Natural killer cell (primary cell): ENCODE measurements at regions of chr6 and their contacts with region 1.

Region 1: DNA sequence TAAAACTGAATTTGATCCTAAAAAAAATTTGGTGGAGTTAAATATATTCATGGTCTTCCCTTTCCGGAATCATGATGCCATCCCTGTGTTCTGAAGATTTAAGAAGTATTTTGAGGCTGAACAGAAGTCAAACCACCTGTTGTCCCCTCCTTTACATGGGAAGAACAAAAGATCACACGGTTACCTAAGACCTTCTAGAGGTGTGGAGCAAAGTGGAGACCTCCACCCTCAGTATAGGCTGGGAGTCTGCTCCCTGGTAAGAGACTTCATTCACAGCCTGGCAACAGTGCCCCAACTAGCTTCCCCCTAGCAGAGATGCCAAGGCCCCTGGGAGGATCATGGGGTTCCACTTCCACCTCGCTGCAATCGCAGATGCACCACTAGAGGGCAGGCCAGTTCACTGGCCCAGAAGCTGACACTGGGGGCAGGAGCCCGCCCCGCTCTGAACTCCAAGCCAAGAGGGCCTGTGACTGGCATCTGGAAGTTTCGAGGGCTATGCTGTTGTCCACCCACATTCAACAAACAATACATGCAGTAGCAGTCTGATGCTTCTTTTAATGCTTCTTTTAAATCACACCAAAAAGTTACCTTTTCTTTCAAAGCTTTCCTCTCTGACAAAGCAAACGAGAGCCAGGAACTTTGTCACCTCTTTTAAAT is 19.5 kb upstream of the UBE2J1 start:
- DNase-seq: peak; percentile 74 to 88
- ATAC-seq: peak; percentile 66 to 80 (median 72)
- H3K4me3 ChIP-seq: no peak overlapping the region
- H3K4me3 Mint-ChIP-seq: no peak overlapping the region
- H3K27ac ChIP-seq: no peak overlapping the region
- H3K27ac Mint-ChIP-seq: no peak overlapping the region
- H3K4me1 ChIP-seq: peaks cover 17% of the 10 kb centered on the region
- H3K4me1 Mint-ChIP-seq: peaks cover 14 to 25% of the 10 kb centered on the region in 2 donors
- H3K27me3 ChIP-seq: peaks cover 15% of the 10 kb centered on the region
- H3K27me3 Mint-ChIP-seq: peaks cover 24 to 25% of the 10 kb centered on the region in 2 donors
- CTCF ChIP-seq: peak; percentile 98

Region 2: GRCh38 chr6:88982720-88983119 is 389.3 kb before region 1 on chr6:
- intact Hi-C with region 1: loop called (anchors 2 kb)
- DNase-seq: peak in 1 of 2 donors; percentile 81
- ATAC-seq: peak; percentile 86 to 99 (median 94)
- H3K4me3 ChIP-seq: no peak overlapping the region
- H3K4me3 Mint-ChIP-seq: no peak overlapping the region
- H3K27ac ChIP-seq: no peak overlapping the region
- H3K27ac Mint-ChIP-seq: no peak overlapping the region
- H3K4me1 ChIP-seq: no peaks in the 10 kb centered on the region
- H3K4me1 Mint-ChIP-seq: peaks cover 0 to 5% of the 10 kb centered on the region in 2 donors
- H3K27me3 ChIP-seq: no peaks in the 10 kb centered on the region
- H3K27me3 Mint-ChIP-seq: peaks cover 0 to 3% of the 10 kb centered on the region in 2 donors
- CTCF ChIP-seq: peak; percentile 84

Region 3: GRCh38 chr6:89330910-89331309 is 41.1 kb before region 1 on chr6:
- intact Hi-C with region 1: no loop called
- DNase-seq: no peak
- ATAC-seq: no peak
- H3K4me3 ChIP-seq: no peak overlapping the region
- H3K4me3 Mint-ChIP-seq: no peak overlapping the region
- H3K27ac ChIP-seq: no peak overlapping the region
- H3K27ac Mint-ChIP-seq: no peak overlapping the region
- H3K4me1 ChIP-seq: no peaks in the 10 kb centered on the region
- H3K4me1 Mint-ChIP-seq: peaks cover 0 to 4% of the 10 kb centered on the region in 2 donors
- H3K27me3 ChIP-seq: no peaks in the 10 kb centered on the region
- H3K27me3 Mint-ChIP-seq: no peaks in the 10 kb centered on the region
- CTCF ChIP-seq: no peak

Region 4: DNA sequence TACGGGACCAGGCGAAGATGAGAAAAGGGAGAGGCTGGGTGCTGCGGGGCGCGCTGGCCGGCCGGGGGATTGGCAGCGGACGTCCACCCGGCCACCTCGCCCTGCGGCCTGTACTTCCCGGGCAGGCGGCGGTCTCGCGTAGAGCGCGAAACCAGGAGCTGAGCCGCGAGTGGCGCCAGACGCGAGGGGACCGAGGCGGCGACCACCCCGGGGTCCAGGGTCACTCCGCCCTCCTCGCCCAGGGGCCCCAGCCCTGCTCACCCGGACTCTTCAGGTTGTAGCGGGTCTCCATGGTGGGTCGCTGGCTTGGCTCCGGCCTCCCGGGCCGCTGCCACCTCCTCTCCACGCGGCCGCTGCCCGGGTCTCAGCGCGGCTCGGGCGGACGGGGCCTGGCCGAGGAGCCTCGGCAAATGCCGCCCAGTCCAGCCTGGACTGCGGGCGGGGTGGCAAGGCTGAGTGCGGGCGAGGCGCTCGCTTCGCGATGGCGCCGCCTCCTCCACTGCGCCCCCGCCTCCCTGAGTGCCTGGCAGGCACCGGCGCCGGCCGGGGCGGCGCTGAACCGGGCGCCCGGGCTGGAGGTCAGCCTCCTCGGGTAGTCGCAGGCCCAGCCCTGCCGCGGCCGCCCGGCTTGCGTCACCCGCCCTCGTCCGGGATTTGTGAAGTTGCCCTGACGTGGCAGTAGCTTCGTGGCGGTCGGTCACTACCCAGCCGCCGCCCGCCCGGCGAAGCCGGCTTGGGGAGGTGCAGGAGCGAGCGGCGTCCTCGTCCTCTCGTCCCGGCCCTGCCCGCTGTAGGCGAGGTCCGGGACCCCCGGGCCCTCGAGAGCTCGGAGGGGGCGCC is 19.5 kb before region 1 on chr6 and contains the start of gene UBE2J1:
- intact Hi-C with region 1: loop called (anchors 2 kb)
- DNase-seq: peak; percentile 80 to 82
- ATAC-seq: peak; percentile 88 to 95 (median 92)
- H3K4me3 ChIP-seq: peak within 1 kb of the TSS; percentile 66
- H3K4me3 Mint-ChIP-seq: peak within 1 kb of the TSS; percentile 100
- H3K27ac ChIP-seq: peak within 1 kb of the TSS; percentile 92
- H3K27ac Mint-ChIP-seq: peak within 1 kb of the TSS; percentile 96
- H3K4me1 ChIP-seq: peaks cover 19% of the 10 kb centered on the region
- H3K4me1 Mint-ChIP-seq: peaks cover 55 to 63% of the 10 kb centered on the region in 2 donors
- H3K27me3 ChIP-seq: no peaks in the 10 kb centered on the region
- H3K27me3 Mint-ChIP-seq: no peaks in the 10 kb centered on the region
- CTCF ChIP-seq: no peak
- total RNA-seq, gene UBE2J1: 34.1 to 58.1 (median 45.9) TPM

Region 5: DNA sequence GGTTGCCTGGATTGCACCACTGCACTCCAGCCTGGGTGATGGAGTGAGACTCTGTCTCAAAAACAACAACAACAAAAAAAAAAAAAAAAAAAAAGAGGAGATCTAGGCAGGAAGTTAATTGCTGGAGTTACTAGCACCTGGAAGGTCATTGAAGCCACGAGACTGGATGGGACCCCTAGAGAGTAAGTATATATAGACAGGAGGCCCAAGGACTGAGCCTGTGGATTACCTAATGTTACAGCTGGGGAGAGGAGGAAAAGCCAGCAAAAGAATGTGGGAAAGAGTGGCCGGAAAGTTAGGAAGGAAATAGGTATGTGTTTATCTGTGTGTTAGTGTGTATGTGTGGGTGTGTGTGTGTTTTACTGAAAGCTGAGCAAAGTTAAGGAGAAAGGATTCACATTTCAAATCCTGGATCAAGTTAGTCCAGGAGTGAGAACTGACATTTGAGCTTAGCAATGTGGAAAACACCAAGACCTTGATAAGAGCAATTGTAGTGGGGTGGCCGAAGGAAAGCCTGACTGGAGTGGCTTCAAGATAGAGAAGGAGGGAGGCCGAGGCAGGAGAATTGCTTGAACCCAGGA is 99.4 kb after region 1 on chr6:
- intact Hi-C with region 1: loop called (anchors 5 kb)
- DNase-seq: no peak
- ATAC-seq: no peak
- H3K4me3 ChIP-seq: no peak overlapping the region
- H3K4me3 Mint-ChIP-seq: no peak overlapping the region
- H3K27ac ChIP-seq: no peak overlapping the region
- H3K27ac Mint-ChIP-seq: no peak overlapping the region
- H3K4me1 ChIP-seq: peaks cover 31% of the 10 kb centered on the region
- H3K4me1 Mint-ChIP-seq: peaks cover 29 to 30% of the 10 kb centered on the region in 2 donors
- H3K27me3 ChIP-seq: no peaks in the 10 kb centered on the region
- H3K27me3 Mint-ChIP-seq: no peaks in the 10 kb centered on the region
- CTCF ChIP-seq: no peak

Region 6: DNA sequence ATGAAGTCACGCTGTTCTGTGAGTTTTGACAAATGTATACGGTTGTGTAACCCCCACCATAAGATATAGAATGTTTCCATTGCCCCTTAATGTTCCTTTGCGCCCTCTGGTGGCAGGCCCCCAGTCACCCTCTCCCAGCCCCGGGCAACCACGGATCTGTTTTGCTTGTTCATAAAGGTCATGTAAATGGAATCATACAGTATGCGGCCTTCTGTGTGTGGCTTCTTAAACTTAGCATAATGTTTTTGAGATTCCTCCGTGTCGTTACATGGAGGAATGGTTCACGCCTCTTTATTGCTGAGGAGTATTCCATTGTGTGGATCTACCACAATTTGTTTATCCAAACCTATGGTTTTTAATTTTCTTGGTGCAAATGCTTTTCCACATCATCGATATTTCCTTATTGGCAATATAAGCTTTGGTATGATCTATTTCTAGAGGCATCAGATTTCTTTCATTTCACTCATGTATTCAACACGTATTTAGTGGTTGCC is 238.2 kb after region 1 on chr6:
- intact Hi-C with region 1: loop called (anchors 1 kb)
- DNase-seq: peak; percentile 73 to 83
- ATAC-seq: peak; percentile 82 to 91 (median 88)
- H3K4me3 ChIP-seq: no peak overlapping the region
- H3K4me3 Mint-ChIP-seq: no peak overlapping the region
- H3K27ac ChIP-seq: no peak overlapping the region
- H3K27ac Mint-ChIP-seq: no peak overlapping the region
- H3K4me1 ChIP-seq: no peaks in the 10 kb centered on the region
- H3K4me1 Mint-ChIP-seq: no peaks in the 10 kb centered on the region
- H3K27me3 ChIP-seq: no peaks in the 10 kb centered on the region
- H3K27me3 Mint-ChIP-seq: no peaks in the 10 kb centered on the region
- CTCF ChIP-seq: peak; percentile 93